ENCODE measurements at regions of chr18 and their contacts with region 1.

Region 1: GRCh38 chr18:2096554-2096953 is 474.8 kb downstream of the METTL4 start:
- DNase-seq: no peak
- H3K4me3 ChIP-seq: no peak overlapping the region
- H3K27ac ChIP-seq: no peak overlapping the region
- H3K4me1 ChIP-seq: no peaks in the 10 kb centered on the region
- CTCF ChIP-seq: no peak

Region 2: GRCh38 chr18:2036086-2036485 is 60.5 kb before region 1 on chr18:
- CTCF ChIA-PET with region 1: no interaction called
- POLR2A ChIA-PET with region 1: no interaction called
- intact Hi-C with region 1: loop called (anchors 10 kb)
- DNase-seq: no peak
- H3K4me3 ChIP-seq: no peak overlapping the region
- H3K27ac ChIP-seq: no peak overlapping the region
- H3K4me1 ChIP-seq: no peaks in the 10 kb centered on the region
- CTCF ChIP-seq: no peak

Region 3: GRCh38 chr18:2049986-2050385 is 46.6 kb before region 1 on chr18:
- CTCF ChIA-PET with region 1: no interaction called
- POLR2A ChIA-PET with region 1: no interaction called
- intact Hi-C with region 1: no loop called
- DNase-seq: no peak
- H3K4me3 ChIP-seq: no peak overlapping the region
- H3K27ac ChIP-seq: no peak overlapping the region
- H3K4me1 ChIP-seq: no peaks in the 10 kb centered on the region
- CTCF ChIP-seq: no peak